Calu3 (cell line): ENCODE measurements at regions of chr1 and their contacts with region 1.

Region 1: GRCh38 chr1:203861379-203862184 is at the start of gene SNRPE:
- DNase-seq: peak; percentile 98
- H3K4me3 Mint-ChIP-seq: peak within 1 kb of the TSS; percentile 99
- H3K27ac Mint-ChIP-seq: peak within 1 kb of the TSS; percentile 98
- H3K4me1 Mint-ChIP-seq: peaks cover 22% of the 10 kb centered on the region
- H3K27me3 Mint-ChIP-seq: no peaks in the 10 kb centered on the region
- CTCF ChIP-seq: peak; percentile 90
- total RNA-seq, gene SNRPE: 195 and 224 TPM in 2 replicates

Region 2: DNA sequence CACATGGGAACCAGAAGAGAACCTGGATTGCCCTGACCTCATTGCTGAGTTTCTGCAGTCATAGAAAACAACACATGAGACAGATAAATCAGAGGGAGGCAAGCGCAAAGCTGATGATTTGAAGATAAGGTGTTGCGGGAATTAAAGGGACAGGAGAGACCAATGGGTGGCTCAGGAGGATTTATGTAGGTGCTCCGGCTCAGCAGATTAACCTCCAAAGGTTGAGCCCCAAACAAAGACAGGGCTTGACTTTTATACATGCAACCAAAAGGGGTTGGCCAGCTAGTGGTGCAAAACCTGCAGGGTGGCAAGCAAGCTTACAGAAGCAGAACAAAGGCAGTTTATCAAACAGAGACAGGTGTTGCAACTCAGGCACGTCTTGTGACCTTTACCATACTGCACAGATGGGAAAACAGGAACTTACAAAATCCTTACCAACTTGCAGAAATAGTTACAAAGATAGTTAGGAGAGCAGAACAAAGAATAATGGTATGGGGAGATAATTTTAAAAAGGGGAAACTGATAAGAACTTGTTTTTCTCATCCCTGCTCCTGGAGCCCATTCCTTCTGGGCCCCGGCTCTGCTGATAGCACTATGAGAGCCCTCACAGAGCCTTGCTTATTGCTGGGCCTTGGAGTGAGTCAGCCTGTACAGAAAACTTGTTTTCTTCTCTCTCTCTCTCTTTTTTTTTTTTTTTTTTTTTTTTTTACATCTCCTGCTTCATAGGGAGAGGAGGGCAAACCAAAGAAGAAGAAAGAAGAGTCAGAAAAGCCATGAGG is 93.4 kb after region 1 on chr1:
- CTCF ChIA-PET with region 1: no interaction called
- intact Hi-C with region 1: no loop called
- DNase-seq: no peak
- H3K4me3 Mint-ChIP-seq: no peak overlapping the region
- H3K27ac Mint-ChIP-seq: no peak overlapping the region
- H3K4me1 Mint-ChIP-seq: no peaks in the 10 kb centered on the region
- H3K27me3 Mint-ChIP-seq: peaks cover 27% of the 10 kb centered on the region
- CTCF ChIP-seq: no peak

Region 3: DNA sequence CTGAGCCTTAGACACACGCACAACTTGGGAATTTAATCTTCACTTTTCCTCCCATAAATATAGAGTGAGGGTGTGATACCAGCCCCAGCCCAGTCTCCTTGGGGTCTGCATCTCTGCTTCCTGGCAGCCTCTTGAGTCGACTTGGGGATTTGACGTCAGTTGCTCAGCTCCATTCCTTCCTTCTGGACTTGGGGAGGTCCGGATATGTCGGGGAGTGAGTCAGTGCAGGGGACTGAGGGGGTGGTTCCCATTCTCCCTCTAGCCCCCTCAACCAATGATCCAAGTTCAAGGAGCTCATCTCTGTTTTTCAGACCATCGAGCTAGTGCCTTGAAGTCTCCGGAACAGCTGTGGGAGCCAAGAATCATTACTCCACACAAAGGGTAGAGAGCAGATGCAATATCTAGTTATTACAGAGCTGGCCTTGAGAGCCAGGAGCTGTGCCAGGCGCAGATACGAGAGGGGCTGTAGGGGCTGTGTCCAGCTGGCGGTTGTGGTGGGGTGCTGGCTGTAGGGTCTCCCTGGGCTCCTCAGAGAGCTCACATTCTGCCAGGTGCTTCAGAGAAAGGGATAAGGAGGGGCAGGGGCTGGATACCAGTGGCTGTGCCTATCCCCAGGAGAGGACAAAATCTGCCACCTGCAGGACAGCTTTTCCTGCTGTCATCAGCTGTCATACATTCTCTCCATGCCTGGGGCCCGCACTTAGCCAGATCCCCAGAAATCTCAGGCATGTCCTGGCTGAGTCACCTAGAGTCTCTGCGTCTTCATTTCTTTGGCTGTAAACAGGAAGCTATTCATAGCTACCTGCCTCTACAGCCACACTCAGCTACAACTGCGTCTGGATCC is 336.8 kb after region 1 on chr1:
- CTCF ChIA-PET with region 1: interaction called, 3 read pairs
- intact Hi-C with region 1: loop called (anchors 5 kb)
- DNase-seq: peak; percentile 81
- H3K4me3 Mint-ChIP-seq: no peak overlapping the region
- H3K27ac Mint-ChIP-seq: no peak overlapping the region
- H3K4me1 Mint-ChIP-seq: peaks cover 31% of the 10 kb centered on the region
- H3K27me3 Mint-ChIP-seq: peaks cover 2% of the 10 kb centered on the region
- CTCF ChIP-seq: peak; percentile 32

Region 4: DNA sequence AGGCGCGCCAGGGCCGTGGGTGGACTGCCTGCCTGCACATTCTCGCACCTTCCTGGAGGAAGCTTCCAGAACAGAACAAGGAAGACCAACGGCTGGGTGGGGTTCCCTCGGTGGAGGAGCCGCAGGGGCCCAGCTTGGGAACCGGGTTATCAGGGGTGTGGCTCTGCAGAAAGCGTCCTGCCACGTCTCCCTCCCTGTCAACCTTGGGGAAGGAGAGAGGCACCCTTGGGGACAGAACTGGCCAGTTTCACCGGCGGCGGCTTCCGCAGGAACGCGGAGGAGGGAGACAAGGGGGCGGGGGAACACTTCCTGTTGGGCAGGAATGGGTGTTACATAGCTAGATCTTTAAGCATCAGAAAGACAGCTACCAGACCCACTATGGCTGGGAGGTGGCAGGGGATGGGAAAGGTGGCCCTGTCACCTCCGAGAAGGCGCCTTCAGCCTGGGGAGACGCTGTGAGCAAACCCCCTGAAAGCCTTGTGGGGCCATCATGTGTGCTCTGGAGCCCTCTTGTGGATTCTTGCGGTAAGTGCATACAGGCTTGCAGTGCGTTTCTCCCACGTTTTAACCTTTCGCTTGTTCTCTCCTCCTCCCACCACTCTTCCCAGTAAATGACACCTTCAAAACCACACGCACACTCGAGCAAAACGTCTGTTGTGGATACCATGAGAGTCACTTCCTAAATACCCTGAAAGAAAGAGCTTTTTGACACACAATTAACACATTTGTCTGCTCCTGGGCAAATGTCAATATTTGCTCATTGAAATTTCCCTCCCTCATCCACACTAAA is 501.9 kb after region 1 on chr1:
- CTCF ChIA-PET with region 1: no interaction called
- intact Hi-C with region 1: loop called (anchors 5 kb)
- DNase-seq: peak; percentile 73
- H3K4me3 Mint-ChIP-seq: peak overlapping the region; percentile 44
- H3K27ac Mint-ChIP-seq: peak overlapping the region; percentile 8
- H3K4me1 Mint-ChIP-seq: peaks cover 34% of the 10 kb centered on the region
- H3K27me3 Mint-ChIP-seq: no peaks in the 10 kb centered on the region
- CTCF ChIP-seq: peak; percentile 98